Natural killer cell (primary cell): ENCODE measurements at regions of chr2 and their contacts with region 1.

Region 1: DNA sequence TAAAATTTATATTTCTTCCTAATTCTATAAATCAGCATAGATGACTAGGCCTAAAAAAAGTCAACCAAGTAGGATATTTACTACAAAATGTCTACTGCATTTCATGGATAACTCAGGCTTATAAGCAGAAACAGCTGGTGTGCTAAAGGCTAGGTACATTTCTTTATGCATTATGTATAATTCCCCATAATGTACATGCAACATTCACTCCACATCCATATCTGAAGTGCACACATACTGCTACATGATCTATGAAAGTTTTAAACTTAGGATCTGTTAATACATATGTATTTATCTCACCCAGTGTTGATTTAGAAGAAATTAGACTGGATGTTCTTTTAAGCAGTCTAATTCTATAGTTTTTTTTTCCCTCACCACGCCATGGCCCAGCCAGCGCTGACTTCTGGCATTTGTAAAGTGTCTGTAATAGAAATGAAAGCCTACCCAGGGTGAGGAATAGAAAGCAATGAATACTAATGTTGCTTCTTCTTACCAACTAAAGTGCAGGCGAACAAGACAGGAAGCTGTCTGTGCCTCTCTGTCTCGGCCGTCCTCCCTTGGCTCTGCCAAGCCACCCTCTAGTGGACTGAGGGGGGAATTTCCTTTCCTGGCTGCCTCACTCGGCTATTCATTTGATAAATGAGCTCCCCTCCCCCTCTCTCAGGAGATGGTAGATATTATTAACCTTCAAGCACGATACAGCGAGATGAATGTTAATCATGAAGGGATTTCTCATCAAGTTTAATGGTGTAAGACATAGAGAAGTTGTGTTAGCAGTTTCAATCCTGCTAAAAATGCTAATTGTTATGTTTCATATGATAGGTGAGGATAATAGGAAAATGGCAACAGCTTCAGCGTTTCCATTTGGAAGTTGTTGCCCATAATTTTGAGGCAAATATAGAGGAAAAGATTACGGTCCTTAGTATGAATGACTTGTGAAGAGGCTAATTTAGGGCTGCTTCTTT is 384.5 kb downstream of the MTX2 start:
- DNase-seq: peak in 1 of 2 donors; percentile 48
- ATAC-seq: peak; percentile 72 to 79 (median 73)
- H3K4me3 ChIP-seq: no peak overlapping the region
- H3K4me3 Mint-ChIP-seq: no peak overlapping the region
- H3K27ac ChIP-seq: no peak overlapping the region
- H3K27ac Mint-ChIP-seq: no peak overlapping the region
- H3K4me1 ChIP-seq: no peaks in the 10 kb centered on the region
- H3K4me1 Mint-ChIP-seq: peaks cover 0 to 4% of the 10 kb centered on the region in 2 donors
- H3K27me3 ChIP-seq: peaks cover 19% of the 10 kb centered on the region
- H3K27me3 Mint-ChIP-seq: peaks cover 37 to 77% of the 10 kb centered on the region in 2 donors
- CTCF ChIP-seq: peak; percentile 48

Region 2: GRCh38 chr2:175366815-175367214 is 1286.9 kb before region 1 on chr2:
- intact Hi-C with region 1: loop called (anchors 5 kb)
- DNase-seq: peak in 1 of 2 donors; percentile 48
- ATAC-seq: peak; percentile 55 to 79 (median 76)
- H3K4me3 ChIP-seq: no peak overlapping the region
- H3K4me3 Mint-ChIP-seq: no peak overlapping the region
- H3K27ac ChIP-seq: no peak overlapping the region
- H3K27ac Mint-ChIP-seq: no peak overlapping the region
- H3K4me1 ChIP-seq: no peaks in the 10 kb centered on the region
- H3K4me1 Mint-ChIP-seq: no peaks in the 10 kb centered on the region
- H3K27me3 ChIP-seq: peaks cover 18% of the 10 kb centered on the region
- H3K27me3 Mint-ChIP-seq: peaks cover 20 to 32% of the 10 kb centered on the region in 2 donors
- CTCF ChIP-seq: peak; percentile 68

Region 3: DNA sequence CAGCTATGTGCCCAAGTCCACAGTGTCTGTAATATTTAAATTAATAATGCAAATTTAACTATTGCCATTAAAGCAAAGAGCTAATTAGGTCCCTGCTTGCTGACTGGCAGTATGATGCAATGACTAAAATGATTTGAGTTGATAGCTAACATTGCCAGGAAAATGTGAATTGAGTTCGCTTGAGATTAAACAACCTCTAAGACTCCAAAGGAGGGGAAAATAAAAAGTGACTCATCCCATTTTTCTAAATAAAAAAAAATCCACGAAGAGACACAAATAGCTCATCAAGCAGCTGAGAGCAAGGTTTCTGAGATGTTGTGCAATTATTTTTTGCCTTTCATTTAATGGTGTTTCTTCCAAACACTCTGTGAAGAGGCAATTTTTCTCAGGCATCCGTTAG is 28.5 kb after region 1 on chr2:
- intact Hi-C with region 1: no loop called
- DNase-seq: no peak
- ATAC-seq: no peak
- H3K4me3 ChIP-seq: no peak overlapping the region
- H3K4me3 Mint-ChIP-seq: no peak overlapping the region
- H3K27ac ChIP-seq: no peak overlapping the region
- H3K27ac Mint-ChIP-seq: no peak overlapping the region
- H3K4me1 ChIP-seq: no peaks in the 10 kb centered on the region
- H3K4me1 Mint-ChIP-seq: no peaks in the 10 kb centered on the region
- H3K27me3 ChIP-seq: peaks cover 15% of the 10 kb centered on the region
- H3K27me3 Mint-ChIP-seq: peaks cover 21 to 59% of the 10 kb centered on the region in 2 donors
- CTCF ChIP-seq: no peak

Region 4: GRCh38 chr2:176814306-176815052 is 160.7 kb after region 1 on chr2:
- intact Hi-C with region 1: loop called (anchors 5 kb)
- DNase-seq: peak in 1 of 2 donors; percentile 61
- ATAC-seq: peak; percentile 73 to 79 (median 76)
- H3K4me3 ChIP-seq: no peak overlapping the region
- H3K4me3 Mint-ChIP-seq: no peak overlapping the region
- H3K27ac ChIP-seq: no peak overlapping the region
- H3K27ac Mint-ChIP-seq: no peak overlapping the region
- H3K4me1 ChIP-seq: no peaks in the 10 kb centered on the region
- H3K4me1 Mint-ChIP-seq: peaks cover 8 to 12% of the 10 kb centered on the region in 2 donors
- H3K27me3 ChIP-seq: no peaks in the 10 kb centered on the region
- H3K27me3 Mint-ChIP-seq: no peaks in the 10 kb centered on the region
- CTCF ChIP-seq: peak; percentile 85

Region 5: GRCh38 chr2:177148477-177149154 is 494.9 kb after region 1 on chr2:
- intact Hi-C with region 1: loop called (anchors 1 kb)
- DNase-seq: peak; percentile 53 to 86
- ATAC-seq: peak; percentile 89 to 92 (median 91)
- H3K4me3 ChIP-seq: peak overlapping the region; percentile 29
- H3K4me3 Mint-ChIP-seq: peak overlapping the region; percentile 90
- H3K27ac ChIP-seq: no peak overlapping the region
- H3K27ac Mint-ChIP-seq: peak overlapping the region in 1 of 2 donors; percentile 42
- H3K4me1 ChIP-seq: peaks cover 8% of the 10 kb centered on the region
- H3K4me1 Mint-ChIP-seq: peaks cover 11 to 12% of the 10 kb centered on the region in 2 donors
- H3K27me3 ChIP-seq: peaks cover 26% of the 10 kb centered on the region
- H3K27me3 Mint-ChIP-seq: peaks cover 44 to 54% of the 10 kb centered on the region in 2 donors
- CTCF ChIP-seq: peak; percentile 92